ENCODE measurements at regions of chr6 and their contacts with region 1.

Region 1: GRCh38 chr6:41367700-41368099 is 32.3 kb downstream of the NCR2 start:
- DNase-seq: peak; percentile 84
- ATAC-seq: peak; percentile 77
- H3K4me3 Mint-ChIP-seq: no peak overlapping the region
- H3K27ac Mint-ChIP-seq: no peak overlapping the region
- H3K4me1 Mint-ChIP-seq: peaks cover 30% of the 10 kb centered on the region
- H3K27me3 Mint-ChIP-seq: peaks cover 75% of the 10 kb centered on the region
- CTCF ChIP-seq: peak; percentile 58

Region 2: DNA sequence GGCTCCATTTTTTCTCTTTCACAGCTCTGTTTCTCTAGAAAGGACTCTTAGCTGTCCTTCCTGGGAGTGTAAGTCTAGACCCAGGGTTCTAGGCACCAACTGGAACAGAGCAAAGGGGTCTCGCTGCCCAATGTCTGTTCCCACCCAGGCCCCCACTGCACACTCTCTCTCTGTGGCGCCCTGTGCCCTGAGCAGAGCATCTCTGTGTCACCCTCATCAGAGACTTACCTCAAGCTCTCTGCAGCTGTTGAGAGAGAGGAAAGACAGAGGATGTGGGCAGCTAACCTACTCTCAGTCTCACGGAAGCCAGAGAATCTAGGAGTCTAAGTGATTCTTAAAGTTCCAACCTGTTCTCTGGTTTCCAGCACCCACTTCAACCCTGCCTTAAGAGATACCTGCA is 22.8 kb before region 1 on chr6:
- CTCF ChIA-PET with region 1: no interaction called
- POLR2A ChIA-PET with region 1: no interaction called
- DNase-seq: no peak
- ATAC-seq: no peak
- H3K4me3 Mint-ChIP-seq: no peak overlapping the region
- H3K27ac Mint-ChIP-seq: no peak overlapping the region
- H3K4me1 Mint-ChIP-seq: no peaks in the 10 kb centered on the region
- H3K27me3 Mint-ChIP-seq: peaks cover 53% of the 10 kb centered on the region
- CTCF ChIP-seq: no peak

Region 3: GRCh38 chr6:41396335-41396734 is 28.6 kb after region 1 on chr6:
- CTCF ChIA-PET with region 1: interaction called, 10 read pairs
- POLR2A ChIA-PET with region 1: no interaction called
- DNase-seq: no peak
- ATAC-seq: no peak
- H3K4me3 Mint-ChIP-seq: no peak overlapping the region
- H3K27ac Mint-ChIP-seq: no peak overlapping the region
- H3K4me1 Mint-ChIP-seq: peaks cover 9% of the 10 kb centered on the region
- H3K27me3 Mint-ChIP-seq: peaks cover 85% of the 10 kb centered on the region
- CTCF ChIP-seq: no peak

Region 4: DNA sequence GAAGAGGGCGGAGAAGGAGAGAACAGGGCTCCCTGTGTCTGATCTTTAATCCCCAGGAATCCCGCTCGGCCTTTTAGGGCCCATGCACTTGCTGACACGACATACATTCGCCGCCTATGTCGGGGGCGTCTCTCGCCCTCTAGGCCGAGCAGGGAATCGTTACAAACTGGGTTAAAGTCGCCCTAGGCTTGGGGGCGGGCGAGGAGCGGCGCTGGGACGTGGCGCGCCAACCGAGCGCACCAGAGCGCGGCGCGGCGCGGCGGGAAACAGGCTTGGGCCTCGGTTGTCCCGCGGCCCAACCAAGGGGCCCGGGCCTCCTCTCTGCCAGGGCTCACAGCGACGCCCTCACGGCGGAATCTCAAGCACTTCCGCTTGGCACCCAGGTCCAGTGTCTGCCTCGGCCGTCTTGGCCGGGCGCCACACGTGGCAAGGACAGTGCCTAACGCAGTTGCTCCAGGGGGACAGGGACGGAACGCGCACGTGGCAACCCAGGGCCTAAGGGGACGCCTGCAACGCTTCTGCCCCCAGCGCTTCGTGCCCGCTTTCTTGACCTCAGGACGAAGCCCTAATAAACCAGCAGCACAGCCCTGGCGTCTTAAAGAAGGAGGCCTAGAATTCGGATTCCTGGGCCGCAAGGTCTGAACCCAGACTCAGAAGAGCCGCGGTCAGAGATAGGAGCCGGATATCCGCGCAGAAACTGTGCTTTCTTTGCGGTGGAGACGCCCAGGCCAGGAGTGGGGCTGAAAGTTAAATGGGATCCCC is 39.2 kb after region 1 on chr6:
- CTCF ChIA-PET with region 1: interaction called, 15 read pairs
- POLR2A ChIA-PET with region 1: no interaction called
- DNase-seq: peak; percentile 55
- ATAC-seq: peak; percentile 49
- H3K4me3 Mint-ChIP-seq: peak overlapping the region; percentile 55
- H3K27ac Mint-ChIP-seq: no peak overlapping the region
- H3K4me1 Mint-ChIP-seq: peaks cover 34% of the 10 kb centered on the region
- H3K27me3 Mint-ChIP-seq: peaks cover 100% of the 10 kb centered on the region
- CTCF ChIP-seq: no peak

Region 5: GRCh38 chr6:41413250-41413649 is 45.5 kb after region 1 on chr6:
- CTCF ChIA-PET with region 1: interaction called, 15 read pairs
- POLR2A ChIA-PET with region 1: interaction called, 3 read pairs
- DNase-seq: no peak
- ATAC-seq: no peak
- H3K4me3 Mint-ChIP-seq: no peak overlapping the region
- H3K27ac Mint-ChIP-seq: no peak overlapping the region
- H3K4me1 Mint-ChIP-seq: peaks cover 32% of the 10 kb centered on the region
- H3K27me3 Mint-ChIP-seq: peaks cover 100% of the 10 kb centered on the region
- CTCF ChIP-seq: no peak

Region 6: GRCh38 chr6:41449399-41450245 is 81.9 kb after region 1 on chr6:
- CTCF ChIA-PET with region 1: interaction called, 10 read pairs
- POLR2A ChIA-PET with region 1: no interaction called
- DNase-seq: no peak
- ATAC-seq: no peak
- H3K4me3 Mint-ChIP-seq: no peak overlapping the region
- H3K27ac Mint-ChIP-seq: no peak overlapping the region
- H3K4me1 Mint-ChIP-seq: peaks cover 24% of the 10 kb centered on the region
- H3K27me3 Mint-ChIP-seq: peaks cover 30% of the 10 kb centered on the region
- CTCF ChIP-seq: no peak

Region 7: DNA sequence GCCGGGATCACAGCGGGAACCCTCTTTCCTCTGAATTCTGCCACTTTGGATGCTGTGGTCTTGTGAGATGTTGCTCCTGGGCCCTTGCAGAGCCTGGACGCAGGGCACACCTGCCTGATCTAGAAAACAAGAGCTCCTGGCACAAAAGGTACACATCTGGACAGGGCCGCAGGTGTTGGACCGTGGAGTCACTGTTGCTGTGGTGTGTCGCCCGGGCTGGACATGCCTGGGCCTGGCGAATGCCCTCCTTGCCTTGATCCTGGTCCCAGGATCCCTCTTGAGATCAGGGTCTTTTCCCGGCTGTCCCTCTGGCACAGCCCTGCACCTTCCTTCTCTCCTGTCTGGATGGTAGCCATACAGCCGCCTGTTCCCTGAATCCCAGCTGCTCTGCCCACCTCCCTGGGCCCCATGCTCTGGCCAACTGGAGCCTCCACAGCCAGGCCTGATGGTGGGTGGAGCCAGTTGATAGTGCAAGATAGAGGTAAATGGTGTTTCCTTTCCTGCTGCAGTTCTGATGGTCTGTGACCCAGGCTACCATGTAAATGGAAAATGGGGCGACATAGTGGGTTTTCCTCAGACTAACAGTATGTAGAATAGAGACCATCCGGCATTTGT is 183.5 kb after region 1 on chr6:
- CTCF ChIA-PET with region 1: interaction called, 15 read pairs
- POLR2A ChIA-PET with region 1: no interaction called
- DNase-seq: no peak
- ATAC-seq: no peak
- H3K4me3 Mint-ChIP-seq: no peak overlapping the region
- H3K27ac Mint-ChIP-seq: no peak overlapping the region
- H3K4me1 Mint-ChIP-seq: peaks cover 77% of the 10 kb centered on the region
- H3K27me3 Mint-ChIP-seq: peaks cover 91% of the 10 kb centered on the region
- CTCF ChIP-seq: no peak

Region 8: GRCh38 chr6:41700463-41701347 is 333.0 kb after region 1 on chr6:
- CTCF ChIA-PET with region 1: interaction called, 13 read pairs
- POLR2A ChIA-PET with region 1: no interaction called
- DNase-seq: peak; percentile 50
- ATAC-seq: peak; percentile 69
- H3K4me3 Mint-ChIP-seq: no peak overlapping the region
- H3K27ac Mint-ChIP-seq: no peak overlapping the region
- H3K4me1 Mint-ChIP-seq: peaks cover 11% of the 10 kb centered on the region
- H3K27me3 Mint-ChIP-seq: no peaks in the 10 kb centered on the region
- CTCF ChIP-seq: no peak

Measured in WTC11 (cell line).